GM10248 (cell line): ENCODE measurements at regions of chr6 and their contacts with region 1.

Region 1: GRCh38 chr6:44655412-44656342 is 268.2 kb downstream of the CDC5L start:
- DNase-seq: peak; percentile 79
- CTCF ChIP-seq: peak; percentile 96

Region 2: GRCh38 chr6:44630125-44631028 is 25.3 kb before region 1 on chr6:
- CTCF ChIA-PET with region 1: interaction called, 11 read pairs
- POLR2A ChIA-PET with region 1: no interaction called
- DNase-seq: peak; percentile 47
- CTCF ChIP-seq: no peak

Region 3: DNA sequence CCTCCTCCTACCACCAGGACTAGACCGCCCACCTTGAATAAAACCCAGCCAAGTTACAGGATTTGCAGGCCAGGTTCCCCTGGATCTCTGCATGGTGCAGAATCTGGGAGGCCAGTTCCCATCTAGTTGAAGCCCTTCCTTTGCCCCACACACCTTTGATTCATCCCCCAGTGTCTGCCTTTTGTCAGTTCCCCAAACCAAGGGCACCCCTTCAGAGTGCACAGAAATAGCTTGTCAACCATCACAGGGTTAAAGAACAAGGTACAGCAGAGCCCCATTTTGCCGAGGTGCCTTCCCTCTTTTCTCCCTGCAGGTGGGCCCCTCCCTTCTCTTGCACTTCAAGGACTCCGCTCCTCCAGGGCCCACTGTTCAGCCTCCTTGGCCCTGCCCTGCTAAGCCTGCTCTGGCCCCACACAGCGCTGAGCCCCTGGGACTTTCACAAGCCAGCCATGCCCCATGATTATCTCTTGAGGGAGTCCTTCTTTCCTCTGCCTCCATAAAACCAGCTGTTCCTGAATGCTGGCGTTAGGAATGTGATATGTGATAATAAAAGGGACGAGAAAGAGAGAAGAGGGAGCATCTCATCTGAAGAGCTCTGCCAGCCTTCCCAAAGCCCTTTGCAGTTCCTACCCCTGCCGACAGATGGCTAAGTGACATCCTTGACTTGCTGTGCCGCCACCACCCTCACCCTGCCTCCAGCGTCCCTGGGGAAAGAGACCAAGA is 12.2 kb after region 1 on chr6:
- CTCF ChIA-PET with region 1: interaction called, 58 read pairs
- POLR2A ChIA-PET with region 1: no interaction called
- DNase-seq: no peak
- CTCF ChIP-seq: peak; percentile 48

Region 4: DNA sequence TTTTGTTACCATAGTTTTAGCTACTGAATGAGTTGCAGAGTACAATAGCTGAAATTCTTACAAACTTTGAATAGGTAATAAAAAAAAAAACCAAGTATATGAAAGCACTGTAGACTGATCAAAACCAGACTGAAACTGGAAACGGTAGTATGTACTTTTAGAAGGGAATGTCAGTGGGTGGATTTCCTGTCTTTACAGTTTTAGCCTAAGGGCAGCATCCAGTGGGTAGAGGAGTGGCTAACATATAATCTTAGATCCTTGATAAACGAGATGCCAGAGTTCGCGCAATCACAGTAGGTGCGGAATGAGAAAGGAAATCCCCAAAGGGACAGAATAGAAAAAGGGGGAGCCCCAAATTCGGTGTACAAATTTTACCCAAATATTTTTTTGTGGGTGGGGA is 286.5 kb after region 1 on chr6:
- CTCF ChIA-PET with region 1: no interaction called
- POLR2A ChIA-PET with region 1: no interaction called
- DNase-seq: no peak
- CTCF ChIP-seq: no peak

Region 5: GRCh38 chr6:45421709-45422502 is 766.2 kb after region 1 on chr6:
- CTCF ChIA-PET with region 1: interaction called, 26 read pairs
- POLR2A ChIA-PET with region 1: no interaction called
- DNase-seq: peak; percentile 26
- CTCF ChIP-seq: peak; percentile 35

Region 6: GRCh38 chr6:45922728-45923351 is 1267.2 kb after region 1 on chr6:
- CTCF ChIA-PET with region 1: interaction called, 120 read pairs
- POLR2A ChIA-PET with region 1: no interaction called
- DNase-seq: peak; percentile 55
- CTCF ChIP-seq: peak; percentile 63